Endothelial cell of umbilical vein (primary cell): ENCODE measurements at regions of chr1 and their contacts with region 1.

Region 1: GRCh38 chr1:210373885-210374599 is 45.3 kb downstream of the HHAT start:
- DNase-seq: peak; percentile 65
- H3K4me3 ChIP-seq: no peak overlapping the region
- H3K27ac ChIP-seq: peak overlapping the region; percentile 94
- H3K4me1 ChIP-seq: peaks cover 7% of the 10 kb centered on the region
- H3K27me3 ChIP-seq: no peaks in the 10 kb centered on the region
- CTCF ChIP-seq: peak; percentile 73 to 97
- POLR2A ChIP-seq: peak; percentile 100

Region 2: DNA sequence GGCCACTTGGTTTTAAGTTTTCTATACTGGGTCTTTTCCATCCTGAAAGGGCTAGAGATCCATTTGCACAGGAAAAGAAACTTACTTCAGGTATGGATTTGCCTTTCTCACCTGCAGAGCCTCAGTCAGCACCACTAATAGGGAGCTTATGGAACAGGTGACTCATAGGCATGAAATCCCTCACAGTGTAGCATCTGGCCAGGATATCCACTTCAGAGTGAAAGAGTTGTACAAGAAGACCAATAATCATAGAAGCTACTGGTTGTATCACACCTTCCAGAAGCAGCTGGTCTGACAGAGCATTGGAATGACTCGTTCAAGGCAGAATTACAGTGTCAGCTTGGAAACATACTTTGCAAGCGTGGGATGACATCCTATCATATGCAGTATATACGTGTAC is 462.3 kb before region 1 on chr1:
- CTCF ChIA-PET with region 1: no interaction called
- POLR2A ChIA-PET with region 1: no interaction called
- dilution Hi-C with region 1: no loop called
- intact Hi-C with region 1: no loop called
- DNase-seq: no peak
- H3K4me3 ChIP-seq: no peak overlapping the region
- H3K27ac ChIP-seq: no peak overlapping the region
- H3K4me1 ChIP-seq: no peaks in the 10 kb centered on the region
- H3K27me3 ChIP-seq: no peaks in the 10 kb centered on the region
- CTCF ChIP-seq: no peak
- POLR2A ChIP-seq: no peak

Region 3: GRCh38 chr1:210143465-210144062 is 230.5 kb before region 1 on chr1:
- CTCF ChIA-PET with region 1: interaction called, 11 read pairs
- POLR2A ChIA-PET with region 1: no interaction called
- dilution Hi-C with region 1: no loop called
- intact Hi-C with region 1: loop called (anchors 1 kb)
- DNase-seq: peak; percentile 83
- H3K4me3 ChIP-seq: no peak overlapping the region
- H3K27ac ChIP-seq: no peak overlapping the region
- H3K4me1 ChIP-seq: no peaks in the 10 kb centered on the region
- H3K27me3 ChIP-seq: peaks cover 2 to 8% of the 10 kb centered on the region in 2 experiments
- CTCF ChIP-seq: peak; percentile 37 to 43
- POLR2A ChIP-seq: no peak

Region 4: GRCh38 chr1:210239349-210240111 is 134.5 kb before region 1 on chr1:
- CTCF ChIA-PET with region 1: no interaction called
- POLR2A ChIA-PET with region 1: no interaction called
- dilution Hi-C with region 1: no loop called
- intact Hi-C with region 1: loop called (anchors 1 kb)
- DNase-seq: peak; percentile 92
- H3K4me3 ChIP-seq: peak overlapping the region in 1 of 3 experiments; percentile 28
- H3K27ac ChIP-seq: peak overlapping the region; percentile 85
- H3K4me1 ChIP-seq: peaks cover 48% of the 10 kb centered on the region
- H3K27me3 ChIP-seq: no peaks in the 10 kb centered on the region
- CTCF ChIP-seq: peak; percentile 62 to 63
- POLR2A ChIP-seq: peak; percentile 20

Region 5: GRCh38 chr1:210311726-210312493 is 62.1 kb before region 1 on chr1:
- CTCF ChIA-PET with region 1: no interaction called
- POLR2A ChIA-PET with region 1: no interaction called
- dilution Hi-C with region 1: no loop called
- intact Hi-C with region 1: loop called (anchors 1 kb)
- DNase-seq: no peak
- H3K4me3 ChIP-seq: no peak overlapping the region
- H3K27ac ChIP-seq: no peak overlapping the region
- H3K4me1 ChIP-seq: peaks cover 6% of the 10 kb centered on the region
- H3K27me3 ChIP-seq: peaks cover 0 to 2% of the 10 kb centered on the region in 2 experiments
- CTCF ChIP-seq: no peak
- POLR2A ChIP-seq: no peak

Region 6: DNA sequence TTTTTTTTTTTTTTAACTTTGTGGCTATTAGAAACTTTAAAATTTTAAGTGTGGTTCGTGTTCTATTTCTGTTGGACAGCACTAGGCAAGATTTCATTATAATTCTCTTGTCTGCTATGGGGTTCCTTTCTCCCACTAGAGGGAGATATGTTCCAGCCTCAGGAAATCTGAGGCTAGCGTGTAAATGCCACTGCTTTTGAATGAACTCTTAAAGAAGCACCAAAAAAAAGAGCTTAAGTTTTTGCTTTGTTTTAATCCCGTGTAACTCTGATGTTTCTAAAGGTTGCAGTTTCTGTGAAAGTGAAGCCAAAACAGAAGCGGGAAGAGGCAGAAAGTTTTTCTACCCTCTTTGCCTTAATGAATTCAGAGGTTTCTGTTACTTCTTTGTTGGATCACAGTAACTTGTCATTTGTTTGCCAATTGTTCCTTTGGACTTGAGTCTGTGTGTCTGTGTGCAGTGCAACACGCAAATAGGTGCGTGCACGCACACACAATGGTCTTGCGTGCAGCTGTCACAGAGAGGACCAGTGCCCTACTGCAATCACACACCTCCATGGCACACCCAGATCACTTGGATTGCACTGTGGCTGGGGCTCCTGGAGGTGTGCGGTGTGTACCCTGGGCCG is 13.1 kb before region 1 on chr1:
- CTCF ChIA-PET with region 1: interaction called, 16 read pairs
- POLR2A ChIA-PET with region 1: no interaction called
- dilution Hi-C with region 1: no loop called
- intact Hi-C with region 1: no loop called
- DNase-seq: peak; percentile 49
- H3K4me3 ChIP-seq: no peak overlapping the region
- H3K27ac ChIP-seq: no peak overlapping the region
- H3K4me1 ChIP-seq: no peaks in the 10 kb centered on the region
- H3K27me3 ChIP-seq: no peaks in the 10 kb centered on the region
- CTCF ChIP-seq: peak; percentile 27 to 63
- POLR2A ChIP-seq: no peak

Region 7: DNA sequence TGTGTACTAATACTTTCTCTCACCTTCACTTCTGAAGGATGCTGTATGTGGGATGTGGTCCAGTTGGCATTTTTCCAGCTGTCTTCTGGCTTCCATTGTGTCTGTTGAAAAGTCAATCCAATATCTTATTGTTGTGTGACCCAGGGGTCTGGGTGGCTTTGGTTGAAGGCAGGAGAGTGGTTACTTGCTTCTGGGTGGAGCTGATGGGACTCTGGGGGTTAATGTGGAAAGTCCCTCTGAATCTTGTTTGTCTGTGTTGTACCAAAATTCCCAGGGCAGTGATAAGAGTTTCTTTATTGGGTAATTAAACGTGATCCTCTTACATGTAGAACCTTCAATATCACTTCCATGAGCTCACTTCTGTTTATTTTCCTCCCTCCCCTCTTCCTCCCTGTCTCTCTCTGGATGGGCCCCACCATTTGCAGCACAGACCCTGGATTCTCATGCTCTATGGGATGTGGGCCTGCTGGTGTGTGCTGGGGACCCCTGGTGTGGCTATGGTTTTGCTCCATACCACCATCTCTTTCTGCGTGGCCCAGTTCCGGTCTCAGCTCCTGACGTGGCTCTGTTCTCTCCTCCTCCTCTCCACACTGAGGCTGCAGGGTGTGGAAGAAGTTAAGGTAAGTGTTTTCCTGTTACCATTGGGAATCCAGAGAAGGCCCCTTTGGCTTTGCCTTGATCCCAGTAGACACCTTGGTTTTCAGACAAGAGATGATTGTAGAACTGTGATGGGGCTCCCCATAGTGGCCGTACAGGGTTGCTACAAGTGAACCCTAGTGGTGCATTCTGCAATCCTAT is 26.2 kb after region 1 on chr1:
- CTCF ChIA-PET with region 1: interaction called, 12 read pairs
- POLR2A ChIA-PET with region 1: no interaction called
- dilution Hi-C with region 1: no loop called
- intact Hi-C with region 1: loop called (anchors 1 kb)
- DNase-seq: peak; percentile 48
- H3K4me3 ChIP-seq: no peak overlapping the region
- H3K27ac ChIP-seq: no peak overlapping the region
- H3K4me1 ChIP-seq: no peaks in the 10 kb centered on the region
- H3K27me3 ChIP-seq: peaks cover 1 to 4% of the 10 kb centered on the region in 2 experiments
- CTCF ChIP-seq: peak; percentile 81 to 89
- POLR2A ChIP-seq: no peak

Region 8: GRCh38 chr1:210633636-210634035 is 259.6 kb after region 1 on chr1:
- CTCF ChIA-PET with region 1: no interaction called
- POLR2A ChIA-PET with region 1: no interaction called
- dilution Hi-C with region 1: no loop called
- intact Hi-C with region 1: no loop called
- DNase-seq: no peak
- H3K4me3 ChIP-seq: no peak overlapping the region
- H3K27ac ChIP-seq: no peak overlapping the region
- H3K4me1 ChIP-seq: no peaks in the 10 kb centered on the region
- H3K27me3 ChIP-seq: no peaks in the 10 kb centered on the region
- CTCF ChIP-seq: no peak
- POLR2A ChIP-seq: no peak